MCF 10A (cell line): ENCODE measurements at regions of chr12 and their contacts with region 1.

Region 1: GRCh38 chr12:49776413-49776812 is 35.1 kb downstream of the TMBIM6 start:
- DNase-seq: peak; percentile 82
- H3K4me3 Mint-ChIP-seq: no peak overlapping the region
- H3K27ac Mint-ChIP-seq: peak overlapping the region; percentile 42
- H3K4me1 Mint-ChIP-seq: peaks cover 17% of the 10 kb centered on the region
- H3K27me3 Mint-ChIP-seq: peaks cover 20% of the 10 kb centered on the region
- CTCF ChIP-seq: peak; percentile 92

Region 2: GRCh38 chr12:49478949-49479664 is 297.3 kb before region 1 on chr12:
- CTCF ChIA-PET with region 1: no interaction called
- POLR2A ChIA-PET with region 1: no interaction called
- intact Hi-C with region 1: no loop called
- DNase-seq: no peak
- H3K4me3 Mint-ChIP-seq: no peak overlapping the region
- H3K27ac Mint-ChIP-seq: no peak overlapping the region
- H3K4me1 Mint-ChIP-seq: peaks cover 6% of the 10 kb centered on the region
- H3K27me3 Mint-ChIP-seq: no peaks in the 10 kb centered on the region
- CTCF ChIP-seq: no peak

Region 3: DNA sequence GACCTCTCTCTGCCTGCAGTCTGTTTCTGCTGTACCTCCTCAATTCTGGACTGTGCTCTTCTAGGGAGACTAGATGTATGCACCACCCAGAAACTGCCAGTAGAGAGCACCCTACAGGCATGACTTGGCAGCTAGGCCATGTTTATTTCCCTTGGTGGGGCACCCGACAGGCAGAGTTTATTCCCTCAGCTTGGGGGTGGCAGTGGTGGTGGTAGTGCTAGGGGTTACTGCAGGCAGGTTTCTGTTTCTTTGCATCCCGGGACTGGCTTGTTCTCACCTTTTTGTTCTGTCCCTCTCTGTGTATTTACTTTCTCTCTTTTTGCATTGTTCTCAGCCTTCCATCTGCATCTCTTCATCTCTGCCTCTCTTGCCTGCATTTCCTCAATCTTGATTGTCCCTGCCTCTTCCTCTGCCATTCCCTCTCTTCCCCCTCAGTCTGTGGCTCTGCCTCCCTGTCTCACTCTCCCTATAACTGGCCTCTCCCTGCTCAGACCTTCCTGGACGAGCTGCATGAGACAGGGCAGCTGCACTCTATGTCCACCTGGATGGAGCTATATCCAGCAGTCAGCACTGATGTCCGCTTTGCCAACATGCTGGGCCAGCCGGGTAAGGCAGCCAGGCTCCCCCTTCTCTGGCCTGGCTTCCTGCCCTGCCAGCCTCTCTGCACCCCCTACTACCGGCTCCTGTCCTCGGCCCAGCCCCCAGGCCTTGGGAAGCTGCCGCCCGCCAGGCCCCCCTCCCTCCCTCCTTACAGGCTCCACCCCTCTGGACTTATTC is 139.2 kb before region 1 on chr12:
- CTCF ChIA-PET with region 1: interaction called, 3 read pairs
- POLR2A ChIA-PET with region 1: no interaction called
- intact Hi-C with region 1: loop called (anchors 2 kb)
- DNase-seq: peak; percentile 59
- H3K4me3 Mint-ChIP-seq: no peak overlapping the region
- H3K27ac Mint-ChIP-seq: no peak overlapping the region
- H3K4me1 Mint-ChIP-seq: no peaks in the 10 kb centered on the region
- H3K27me3 Mint-ChIP-seq: no peaks in the 10 kb centered on the region
- CTCF ChIP-seq: peak; percentile 46

Region 4: DNA sequence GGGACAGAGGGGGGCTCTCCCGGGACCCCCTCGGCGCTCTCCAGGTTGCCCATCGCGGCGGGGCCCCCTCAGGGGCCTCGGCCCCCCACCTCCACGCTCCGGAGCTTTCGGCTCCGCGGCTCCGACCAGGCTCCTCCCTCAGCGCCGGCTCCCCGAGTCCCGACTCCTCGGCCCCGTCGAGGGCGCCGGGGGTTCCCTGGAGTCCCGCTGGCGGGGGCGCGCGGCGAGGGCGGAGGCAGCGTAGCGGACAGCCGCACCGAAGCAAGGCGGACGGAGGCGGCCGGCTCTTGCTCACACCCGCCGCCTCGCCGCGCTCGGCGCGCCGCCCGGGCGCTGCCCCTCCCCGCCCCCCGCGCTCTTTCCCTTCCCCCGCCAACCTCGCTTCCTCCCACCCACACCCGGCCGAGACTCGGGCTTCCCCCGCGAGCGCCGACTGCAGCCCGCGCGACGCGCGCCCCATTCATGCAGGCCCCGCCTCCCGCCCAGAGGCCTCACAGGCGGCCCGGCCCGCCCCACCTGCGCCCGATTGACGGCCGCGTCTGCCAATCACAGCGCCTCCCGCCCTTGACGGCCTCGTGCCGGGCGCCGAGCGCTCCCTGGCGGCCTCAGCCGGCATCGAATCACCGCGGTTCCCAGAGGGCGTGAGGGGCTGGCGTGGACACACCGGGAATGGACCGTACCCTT is 69.1 kb before region 1 on chr12 and contains the start of gene FMNL3:
- CTCF ChIA-PET with region 1: no interaction called
- POLR2A ChIA-PET with region 1: no interaction called
- intact Hi-C with region 1: no loop called
- DNase-seq: peak; percentile 89
- H3K4me3 Mint-ChIP-seq: peak within 1 kb of the TSS; percentile 50
- H3K27ac Mint-ChIP-seq: no peak within 1 kb of the TSS
- H3K4me1 Mint-ChIP-seq: peaks cover 5% of the 10 kb centered on the region
- H3K27me3 Mint-ChIP-seq: peaks cover 66% of the 10 kb centered on the region
- CTCF ChIP-seq: peak; percentile 91
- total RNA-seq, gene FMNL3: 0.58 and 0.91 TPM in 2 replicates

Region 5: DNA sequence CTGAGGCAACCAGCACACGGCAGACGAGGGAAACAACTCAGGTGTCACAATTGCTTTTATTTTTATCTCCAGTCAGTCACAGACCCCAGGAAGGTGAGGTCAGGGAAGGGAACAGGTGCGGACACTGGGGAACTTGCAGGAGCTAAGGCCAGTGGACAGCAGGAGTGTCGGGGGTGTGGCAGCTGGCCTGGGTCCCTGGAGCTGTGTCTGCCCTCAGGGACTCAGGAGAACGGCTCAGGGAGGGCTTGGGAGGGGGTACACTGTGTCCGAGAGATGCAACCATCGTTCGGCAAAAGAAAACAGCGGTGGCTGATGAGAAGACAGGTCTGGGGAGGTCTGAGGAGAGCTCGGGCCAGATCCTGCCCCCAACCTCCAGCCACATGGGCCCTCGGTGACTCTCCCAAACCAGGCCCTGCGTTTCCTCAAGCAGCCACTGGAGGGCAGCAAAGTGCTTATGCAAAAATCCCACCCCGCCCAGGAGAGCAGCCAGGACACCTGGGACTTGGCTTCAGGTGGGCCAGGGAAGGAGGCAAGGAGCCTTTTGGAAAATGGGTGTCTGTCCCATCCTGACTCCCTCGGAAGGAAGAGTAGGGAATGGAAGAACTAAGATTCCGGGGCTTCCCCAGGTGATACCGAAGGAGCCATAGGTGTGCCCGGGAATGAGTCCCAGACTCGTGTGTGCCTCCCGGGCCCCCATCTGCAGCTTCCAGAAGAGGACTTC is 90.6 kb after region 1 on chr12:
- CTCF ChIA-PET with region 1: interaction called, 10 read pairs
- POLR2A ChIA-PET with region 1: no interaction called
- intact Hi-C with region 1: loop called (anchors 1 kb)
- DNase-seq: peak; percentile 77
- H3K4me3 Mint-ChIP-seq: no peak overlapping the region
- H3K27ac Mint-ChIP-seq: no peak overlapping the region
- H3K4me1 Mint-ChIP-seq: peaks cover 10% of the 10 kb centered on the region
- H3K27me3 Mint-ChIP-seq: peaks cover 14% of the 10 kb centered on the region
- CTCF ChIP-seq: peak; percentile 95